ENCODE measurements at regions of chr6 and their contacts with region 1.

Region 1: DNA sequence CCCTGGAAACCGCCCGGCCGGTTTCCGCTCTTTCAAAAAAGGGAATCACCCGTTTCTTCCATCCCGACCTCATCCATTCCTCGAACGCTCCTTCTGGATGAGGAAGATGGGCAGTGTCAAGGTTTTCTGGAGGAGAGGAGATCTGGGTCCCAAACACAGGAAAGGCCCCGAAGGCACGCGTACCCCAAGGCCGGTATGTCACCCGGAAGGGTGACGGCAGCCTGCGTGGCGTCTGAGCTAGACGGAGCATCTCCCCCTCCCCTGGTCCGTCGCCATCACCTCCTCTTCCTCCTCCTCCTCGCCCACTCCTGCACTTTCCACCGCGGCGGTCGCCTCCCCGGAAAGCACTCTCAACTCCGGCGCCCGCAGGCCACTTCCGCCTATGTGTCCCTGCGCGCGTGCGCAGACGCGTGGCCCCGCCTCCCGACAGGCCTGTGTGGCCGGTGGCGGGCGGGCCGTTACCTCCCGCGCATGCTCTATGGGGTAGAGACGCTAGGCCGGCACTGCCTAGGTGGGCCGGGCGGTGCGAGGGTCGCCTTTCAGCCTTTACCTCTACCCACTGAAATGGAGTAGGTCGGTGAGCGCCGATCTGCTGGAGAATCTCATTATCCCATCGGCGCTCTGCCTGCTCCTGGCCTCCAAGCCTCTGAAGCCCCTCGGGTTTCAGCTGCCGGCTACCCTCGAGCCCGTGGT is at the start of gene SLC35B3:
- DNase-seq: peak; percentile 100
- H3K4me3 Mint-ChIP-seq: peak within 1 kb of the TSS; percentile 97
- H3K27ac Mint-ChIP-seq: peak within 1 kb of the TSS; percentile 99
- H3K4me1 Mint-ChIP-seq: peaks cover 32% of the 10 kb centered on the region
- H3K27me3 Mint-ChIP-seq: peaks cover 2% of the 10 kb centered on the region
- total RNA-seq, gene SLC35B3: 7.1 and 7.3 TPM in 2 replicates

Region 2: DNA sequence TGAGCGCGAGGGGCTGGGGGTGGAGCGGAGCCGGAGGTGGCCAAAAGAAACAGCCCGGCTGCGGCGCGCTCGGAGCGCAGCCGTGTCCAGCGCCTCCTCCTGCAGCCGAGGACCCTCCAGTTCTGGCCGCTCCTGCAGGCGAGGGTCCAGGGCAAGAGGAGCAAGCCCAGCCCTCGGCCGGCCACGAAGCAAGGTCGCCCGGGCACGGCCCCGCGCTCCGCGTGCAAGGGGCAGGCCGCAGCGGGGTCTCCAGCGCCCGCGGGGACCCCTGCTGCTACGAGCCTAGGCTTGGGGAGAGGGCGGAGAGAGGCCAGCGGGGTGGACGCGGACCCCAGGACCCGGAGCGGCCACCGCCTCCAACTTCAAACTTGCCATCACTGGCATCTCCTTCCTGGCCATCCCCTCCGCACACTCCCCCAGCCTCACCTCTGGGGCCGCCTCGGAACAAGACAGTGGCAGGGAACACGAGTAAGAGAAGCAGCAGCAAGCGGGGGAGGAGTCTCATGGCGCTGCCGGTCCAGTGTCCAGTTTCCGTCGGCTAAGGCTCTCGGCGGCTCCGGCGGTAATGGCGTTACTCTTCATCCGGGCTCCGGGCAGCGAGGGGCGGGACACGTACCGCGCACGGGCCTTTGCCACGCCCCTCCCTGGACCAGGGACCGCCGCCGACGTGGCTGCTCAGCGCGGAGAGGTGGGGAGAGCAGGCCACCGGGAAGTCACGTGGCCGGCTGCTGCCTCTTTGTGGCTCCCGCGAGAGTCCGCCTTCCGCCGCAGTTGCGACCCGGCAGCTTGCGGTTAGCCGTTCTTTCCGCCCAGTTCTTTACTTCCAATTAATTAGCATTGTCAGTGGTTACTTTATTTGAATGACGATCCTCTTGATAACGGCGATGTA is 1122.4 kb before region 1 on chr6 and contains the start of gene SSR1:
- intact Hi-C with region 1: loop called (anchors 10 kb)
- DNase-seq: peak; percentile 99
- H3K4me3 Mint-ChIP-seq: peak within 1 kb of the TSS; percentile 96
- H3K27ac Mint-ChIP-seq: peak within 1 kb of the TSS; percentile 98
- H3K4me1 Mint-ChIP-seq: peaks cover 38% of the 10 kb centered on the region
- H3K27me3 Mint-ChIP-seq: no peaks in the 10 kb centered on the region
- total RNA-seq, gene SSR1: 157 and 162 TPM in 2 replicates

Region 3: DNA sequence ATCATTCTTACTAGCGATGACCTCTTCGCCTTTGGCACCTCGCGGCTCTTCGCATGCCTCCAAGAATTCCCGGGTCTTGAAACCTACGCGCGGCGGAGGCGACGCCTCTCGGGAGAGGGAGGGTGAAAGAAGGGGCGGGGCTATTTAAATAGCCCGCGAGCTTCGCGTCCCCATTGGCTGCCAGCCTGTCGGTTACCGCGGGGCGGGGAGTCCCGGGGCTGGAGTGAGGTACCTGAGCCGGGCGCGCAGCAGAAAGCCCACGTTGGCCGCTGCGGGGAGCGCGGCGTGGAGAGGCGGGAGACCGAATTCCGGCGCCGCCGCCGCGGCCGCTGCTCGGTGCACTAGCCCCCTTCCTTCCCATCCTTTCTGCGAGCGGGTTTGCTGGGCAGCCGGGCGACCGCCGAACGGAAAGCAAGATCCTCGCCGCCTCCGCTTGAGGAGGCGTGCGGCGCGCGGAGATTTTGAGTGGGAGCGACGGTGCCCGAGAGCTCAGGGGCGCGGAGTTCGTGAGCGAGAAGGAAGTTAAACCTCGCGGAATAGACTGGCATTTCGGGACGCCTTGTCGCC is 709.4 kb before region 1 on chr6 and contains the start of gene BMP6:
- intact Hi-C with region 1: loop called (anchors 10 kb)
- DNase-seq: peak; percentile 93
- H3K4me3 Mint-ChIP-seq: peak within 1 kb of the TSS; percentile 87
- H3K27ac Mint-ChIP-seq: no peak within 1 kb of the TSS
- H3K4me1 Mint-ChIP-seq: peaks cover 17% of the 10 kb centered on the region
- H3K27me3 Mint-ChIP-seq: peaks cover 72% of the 10 kb centered on the region
- total RNA-seq, gene BMP6: 0.50 and 0.56 TPM in 2 replicates

Region 4: DNA sequence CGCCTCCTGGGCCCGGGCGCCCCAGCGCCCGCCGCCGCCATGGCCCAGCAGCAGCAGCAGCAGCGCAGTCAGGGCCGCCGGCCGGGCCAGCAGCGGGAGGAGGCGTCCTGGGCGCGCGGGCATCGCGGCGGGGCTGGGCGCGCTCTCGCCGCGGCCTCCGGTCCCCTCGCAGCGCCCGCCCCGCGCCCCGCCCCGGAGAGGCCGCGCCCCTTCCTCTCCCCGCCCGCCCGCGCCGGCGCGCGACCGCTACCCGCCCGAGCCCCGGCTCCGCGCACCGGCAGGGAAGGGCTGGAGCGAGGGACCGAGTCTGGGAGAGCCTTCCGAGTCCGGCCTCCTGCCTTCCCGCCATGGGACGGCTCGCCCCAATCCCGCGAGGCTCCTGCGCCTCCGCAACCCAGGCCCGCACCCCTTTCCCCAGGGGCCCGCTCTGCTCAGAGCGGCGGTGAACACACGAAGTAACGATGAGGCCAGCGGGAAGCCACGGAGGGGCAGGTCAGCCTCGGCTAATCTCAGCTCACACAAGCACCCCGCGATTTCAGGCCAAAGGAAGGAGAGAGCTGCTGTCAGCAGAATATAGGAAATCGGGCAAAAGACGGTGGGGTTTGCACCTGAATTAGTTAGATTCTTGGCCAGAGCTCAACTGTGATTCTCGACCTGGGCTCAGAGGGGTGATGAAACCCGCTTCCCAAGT is 524.5 kb before region 1 on chr6 and contains the start of gene TXNDC5:
- intact Hi-C with region 1: loop called (anchors 10 kb)
- DNase-seq: peak; percentile 93
- H3K4me3 Mint-ChIP-seq: peak within 1 kb of the TSS; percentile 92
- H3K27ac Mint-ChIP-seq: peak within 1 kb of the TSS; percentile 81
- H3K4me1 Mint-ChIP-seq: peaks cover 17% of the 10 kb centered on the region
- H3K27me3 Mint-ChIP-seq: no peaks in the 10 kb centered on the region
- total RNA-seq, gene TXNDC5: 111 and 112 TPM in 2 replicates

Region 5: GRCh38 chr6:8102122-8102958 is 333.0 kb before region 1 on chr6 and contains the start of gene EEF1E1:
- intact Hi-C with region 1: loop called (anchors 1 kb)
- DNase-seq: peak; percentile 97
- H3K4me3 Mint-ChIP-seq: peak within 1 kb of the TSS; percentile 95
- H3K27ac Mint-ChIP-seq: peak within 1 kb of the TSS; percentile 99
- H3K4me1 Mint-ChIP-seq: peaks cover 24% of the 10 kb centered on the region
- H3K27me3 Mint-ChIP-seq: peaks cover 15% of the 10 kb centered on the region
- total RNA-seq, gene EEF1E1: 93.6 and 95.9 TPM in 2 replicates

Region 6: DNA sequence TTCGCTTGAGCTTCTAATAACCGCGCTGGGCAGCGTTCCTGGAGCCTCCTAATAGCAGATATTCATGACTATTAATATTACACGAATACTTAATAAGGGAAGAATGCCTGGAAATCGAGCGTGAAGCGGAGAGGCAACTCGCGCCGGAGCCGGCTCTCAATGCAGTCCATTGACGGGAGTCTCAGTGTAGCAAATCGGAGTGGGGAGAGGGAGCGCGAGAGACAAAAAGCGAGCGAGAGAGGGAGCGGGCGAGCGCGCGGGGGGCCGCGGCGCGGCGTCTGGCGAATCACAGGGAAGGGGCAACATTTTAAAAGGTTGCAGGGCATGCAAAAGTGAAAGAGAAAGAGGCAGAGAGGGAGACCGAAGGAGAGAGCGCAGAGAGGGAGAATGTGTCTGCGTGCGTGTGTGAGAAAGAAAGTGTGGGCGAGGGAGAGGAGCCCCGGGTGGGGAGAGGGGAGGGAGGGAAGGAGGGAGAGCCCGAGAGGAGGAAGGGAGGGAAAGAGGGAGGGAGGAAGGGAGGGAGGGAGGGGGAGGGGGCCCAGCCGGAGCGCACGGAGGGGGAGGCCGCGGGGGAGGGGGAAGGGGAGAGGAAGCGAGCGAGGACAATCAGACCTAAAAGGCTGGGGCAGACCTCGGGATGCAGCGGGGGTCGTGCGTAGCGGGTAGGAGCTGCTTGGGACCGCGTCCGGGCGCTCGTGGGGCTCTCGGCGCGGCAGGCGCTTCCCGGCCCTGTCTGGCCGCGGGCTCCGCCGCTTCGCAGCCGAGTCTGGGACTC is 1976.9 kb after region 1 on chr6:
- intact Hi-C with region 1: loop called (anchors 10 kb)
- DNase-seq: peak; percentile 86
- H3K4me3 Mint-ChIP-seq: peak overlapping the region; percentile 92
- H3K27ac Mint-ChIP-seq: peak overlapping the region; percentile 76
- H3K4me1 Mint-ChIP-seq: peaks cover 31% of the 10 kb centered on the region
- H3K27me3 Mint-ChIP-seq: peaks cover 89% of the 10 kb centered on the region